Spleen (tissue), 13 donors: ENCODE measurements at regions of chr1 and their contacts with region 1.

Region 1: DNA sequence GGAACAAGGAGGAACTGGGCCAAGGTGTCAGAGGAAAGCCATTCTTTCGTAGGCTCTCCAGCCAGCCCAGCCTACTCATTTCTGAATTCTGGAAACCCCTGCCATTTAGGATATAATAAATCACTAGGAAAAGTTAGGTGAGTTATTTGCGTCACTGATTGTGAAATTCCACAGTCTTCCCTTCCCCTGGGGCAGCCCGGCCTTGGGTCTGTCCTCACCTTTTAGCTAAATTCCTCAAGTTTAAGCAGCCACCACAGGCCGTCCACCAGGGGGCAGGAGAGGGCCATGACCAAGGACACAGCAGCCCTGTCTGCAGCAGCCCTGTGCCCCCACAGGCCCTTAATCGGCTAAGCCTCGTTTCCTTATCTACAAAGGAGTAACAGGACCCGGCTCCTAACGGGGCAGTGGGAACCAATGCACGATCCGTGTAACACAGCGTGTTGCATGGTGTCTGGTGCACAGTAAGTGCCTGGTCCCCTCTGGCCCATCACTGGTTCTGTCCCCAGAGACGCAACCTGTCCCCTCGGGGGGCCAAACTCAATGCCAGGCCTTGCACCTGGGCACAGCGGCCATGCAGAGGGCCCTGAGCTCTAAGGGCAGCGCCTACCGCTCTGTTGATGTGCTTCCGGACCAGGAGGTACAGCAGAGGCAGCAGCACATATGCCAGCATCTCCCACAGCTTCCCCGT is 18.1 kb downstream of the GPR157 start:
- DNase-seq: peak; percentile 96
- H3K4me3 ChIP-seq: no peak overlapping the region
- H3K27ac ChIP-seq: no peak overlapping the region
- H3K4me1 ChIP-seq: peaks cover 0 to 14% (median 9%) of the 10 kb centered on the region in 6 donors
- H3K27me3 ChIP-seq: no peaks in the 10 kb centered on the region
- CTCF ChIP-seq: peak; percentile 68 to 91 (median 86)
- POLR2A ChIP-seq: no peak

Region 2: GRCh38 chr1:9196129-9197040 is 85.6 kb after region 1 on chr1:
- intact Hi-C with region 1: loop called (anchors 10 kb)
- DNase-seq: peak; percentile 85
- H3K4me3 ChIP-seq: no peak overlapping the region
- H3K27ac ChIP-seq: peak overlapping the region in 6 of 8 donors; percentile 28 to 66 (median 53)
- H3K4me1 ChIP-seq: peaks cover 11 to 52% (median 26%) of the 10 kb centered on the region in 6 donors
- H3K27me3 ChIP-seq: peaks cover 0 to 48% (median 27%) of the 10 kb centered on the region in 7 donors
- CTCF ChIP-seq: peak; percentile 40 to 84 (median 76)
- POLR2A ChIP-seq: no peak